ENCODE measurements at regions of chr17 and their contacts with region 1.

Region 1: DNA sequence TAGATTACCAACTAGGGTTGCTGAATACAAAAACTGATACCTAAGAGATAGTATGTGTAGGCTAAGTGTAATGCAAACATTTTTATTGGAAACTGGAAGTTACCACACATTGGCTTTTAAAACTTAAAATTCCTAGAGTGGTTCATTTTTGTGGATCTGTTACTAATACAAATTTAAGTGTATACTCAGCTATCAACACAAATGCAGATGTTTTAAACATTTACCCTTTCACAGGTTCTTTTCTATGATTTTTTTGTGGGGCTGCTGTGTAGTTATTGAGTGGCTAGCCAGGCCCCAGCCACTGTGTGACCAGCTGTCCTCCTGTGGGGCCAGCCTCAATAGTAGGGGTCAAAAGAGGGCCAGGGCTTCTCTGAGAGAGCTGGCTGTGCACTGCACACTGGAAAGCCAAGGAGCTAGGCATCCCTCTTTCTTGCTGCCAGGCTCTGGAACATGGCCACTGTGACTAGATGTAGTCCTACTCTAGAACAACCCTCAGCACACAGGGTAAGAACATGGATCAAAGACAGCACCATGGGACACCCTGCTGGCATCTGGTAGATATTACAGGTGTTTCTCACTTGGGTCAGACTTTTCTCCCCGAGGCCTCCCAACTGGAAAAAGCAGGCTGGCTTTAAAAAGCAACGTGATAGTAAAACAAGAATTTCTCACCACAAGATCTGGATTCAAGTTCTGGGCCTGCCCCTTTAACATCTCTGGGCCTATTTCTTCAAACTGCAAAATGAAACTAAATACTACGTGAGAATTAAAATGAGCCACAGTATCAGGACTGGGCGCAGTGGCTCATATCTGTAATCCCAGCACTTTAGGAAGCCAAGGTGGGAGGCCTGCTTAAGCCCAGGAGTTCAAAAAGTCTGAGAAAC is 7.3 kb upstream of the VEZF1 start:
- DNase-seq: peak; percentile 64 to 71
- H3K4me3 ChIP-seq: no peak overlapping the region
- H3K27ac ChIP-seq: peak overlapping the region; percentile 2; the same call in 1 of the 2 replicates
- H3K4me1 ChIP-seq: no peaks in the 10 kb centered on the region
- H3K27me3 ChIP-seq: no peaks in the 10 kb centered on the region
- CTCF ChIP-seq: peak; percentile 93

Region 2: GRCh38 chr17:57671667-57672632 is 323.4 kb before region 1 on chr17:
- CTCF ChIA-PET with region 1: no interaction called
- POLR2A ChIA-PET with region 1: no interaction called
- intact Hi-C with region 1: loop called (anchors 5 kb)
- DNase-seq: peak in 1 of 2 experiments; percentile 44
- H3K4me3 ChIP-seq: no peak overlapping the region
- H3K27ac ChIP-seq: no peak overlapping the region
- H3K4me1 ChIP-seq: no peaks in the 10 kb centered on the region
- H3K27me3 ChIP-seq: peaks cover 3% of the 10 kb centered on the region; the same call in 1 of the 2 replicates
- CTCF ChIP-seq: peak; percentile 91

Region 3: DNA sequence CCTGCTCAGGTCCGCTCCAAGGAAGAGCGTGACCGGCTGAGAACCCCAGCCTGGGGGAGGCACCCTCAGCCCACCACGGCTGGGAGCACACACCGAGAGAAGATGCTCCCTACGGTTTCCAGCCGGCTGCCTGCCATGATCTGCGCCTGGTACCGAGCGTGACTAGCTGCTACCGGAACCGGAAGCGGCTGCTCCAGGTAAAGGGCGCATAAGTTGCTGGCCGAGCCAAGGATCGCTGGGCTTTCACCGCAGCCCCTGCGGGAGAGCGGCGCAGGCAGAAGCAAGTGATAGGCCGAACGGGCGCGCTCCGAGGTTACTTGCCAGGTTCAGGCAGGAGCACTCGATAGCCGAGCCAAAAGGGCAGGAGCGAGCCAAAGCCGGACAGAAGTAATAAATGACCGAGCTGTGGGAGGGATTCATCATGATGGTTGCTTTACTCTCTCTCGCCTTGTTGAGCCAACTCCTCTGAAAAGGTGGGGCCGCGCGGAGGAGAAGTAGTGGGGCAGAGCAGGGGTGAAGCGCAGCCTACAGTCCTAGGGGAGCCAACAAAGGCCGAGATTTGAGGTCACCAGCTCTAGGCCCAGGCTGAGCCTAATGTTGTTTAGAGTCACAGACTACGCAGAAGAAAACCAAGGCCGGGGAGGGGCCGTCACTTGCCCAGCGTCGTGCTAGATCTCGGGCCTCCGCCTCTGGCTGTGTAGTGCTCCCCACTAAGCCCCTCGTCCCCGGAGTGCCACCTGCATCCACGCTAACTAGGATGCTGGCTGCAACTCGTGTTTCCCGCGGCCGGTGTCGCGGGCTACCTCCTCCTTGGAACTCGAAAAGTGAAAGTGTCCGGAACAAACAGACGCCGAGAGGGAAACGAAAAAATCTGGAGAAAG is 145.2 kb before region 1 on chr17 and contains the start of gene MRPS23:
- CTCF ChIA-PET with region 1: interaction called, 7 read pairs
- POLR2A ChIA-PET with region 1: interaction called, 4 read pairs
- intact Hi-C with region 1: loop called (anchors 2 kb)
- DNase-seq: peak; percentile 95 to 98
- H3K4me3 ChIP-seq: peak within 1 kb of the TSS; percentile 72
- H3K27ac ChIP-seq: peak within 1 kb of the TSS; percentile 56
- H3K4me1 ChIP-seq: peaks cover 24% of the 10 kb centered on the region
- H3K27me3 ChIP-seq: no peaks in the 10 kb centered on the region
- CTCF ChIP-seq: no peak
- total RNA-seq, gene MRPS23: 49.7 and 50.3 TPM in 2 replicates

Region 4: DNA sequence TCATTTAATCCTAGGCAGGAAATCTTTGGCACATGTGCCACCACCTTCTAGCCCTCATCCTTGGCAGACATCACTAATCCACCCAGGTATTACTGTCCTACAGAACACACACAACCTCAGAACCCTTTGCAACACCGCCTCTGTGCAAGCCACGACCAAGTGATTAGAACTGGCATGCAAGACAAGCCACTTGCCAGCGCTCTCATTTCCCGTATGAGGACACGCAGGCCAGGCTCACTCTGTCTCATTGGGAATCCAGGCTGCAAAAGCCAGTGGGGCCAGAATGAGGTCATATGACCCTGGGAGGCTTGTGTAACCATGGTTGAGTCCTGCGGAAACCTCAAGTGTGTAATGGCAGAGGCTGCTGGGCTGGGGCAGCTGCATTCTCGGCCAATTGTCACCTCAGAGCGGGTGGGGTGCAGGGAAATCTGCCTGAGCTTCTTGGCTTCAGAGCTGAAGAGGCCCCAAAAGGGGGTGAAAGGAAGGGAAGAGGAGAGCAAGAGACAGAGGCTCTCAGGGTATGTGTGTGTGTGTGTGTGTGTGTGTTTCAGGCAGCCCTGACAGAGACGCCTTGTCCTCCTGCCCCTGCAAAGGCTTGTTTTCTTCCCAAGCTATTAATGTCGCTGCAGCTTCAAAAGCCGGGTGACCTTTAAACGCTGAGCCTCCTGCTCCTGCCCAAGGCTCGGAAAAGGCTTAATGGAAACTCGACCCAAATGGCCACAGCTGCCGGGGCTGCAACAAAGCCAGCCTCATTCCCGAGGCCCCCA is 102.3 kb before region 1 on chr17:
- CTCF ChIA-PET with region 1: interaction called, 3 read pairs
- POLR2A ChIA-PET with region 1: no interaction called
- intact Hi-C with region 1: loop called (anchors 1 kb)
- DNase-seq: peak; percentile 92 to 99
- H3K4me3 ChIP-seq: peak overlapping the region; percentile 41; the same call in 1 of the 2 replicates
- H3K27ac ChIP-seq: peak overlapping the region; percentile 90
- H3K4me1 ChIP-seq: peaks cover 38% of the 10 kb centered on the region
- H3K27me3 ChIP-seq: no peaks in the 10 kb centered on the region
- CTCF ChIP-seq: peak; percentile 58; the same call in 1 of the 2 replicates